CD8-positive, alpha-beta T cell (primary cell): ENCODE measurements at regions of chr6 and their contacts with region 1.

Region 1: DNA sequence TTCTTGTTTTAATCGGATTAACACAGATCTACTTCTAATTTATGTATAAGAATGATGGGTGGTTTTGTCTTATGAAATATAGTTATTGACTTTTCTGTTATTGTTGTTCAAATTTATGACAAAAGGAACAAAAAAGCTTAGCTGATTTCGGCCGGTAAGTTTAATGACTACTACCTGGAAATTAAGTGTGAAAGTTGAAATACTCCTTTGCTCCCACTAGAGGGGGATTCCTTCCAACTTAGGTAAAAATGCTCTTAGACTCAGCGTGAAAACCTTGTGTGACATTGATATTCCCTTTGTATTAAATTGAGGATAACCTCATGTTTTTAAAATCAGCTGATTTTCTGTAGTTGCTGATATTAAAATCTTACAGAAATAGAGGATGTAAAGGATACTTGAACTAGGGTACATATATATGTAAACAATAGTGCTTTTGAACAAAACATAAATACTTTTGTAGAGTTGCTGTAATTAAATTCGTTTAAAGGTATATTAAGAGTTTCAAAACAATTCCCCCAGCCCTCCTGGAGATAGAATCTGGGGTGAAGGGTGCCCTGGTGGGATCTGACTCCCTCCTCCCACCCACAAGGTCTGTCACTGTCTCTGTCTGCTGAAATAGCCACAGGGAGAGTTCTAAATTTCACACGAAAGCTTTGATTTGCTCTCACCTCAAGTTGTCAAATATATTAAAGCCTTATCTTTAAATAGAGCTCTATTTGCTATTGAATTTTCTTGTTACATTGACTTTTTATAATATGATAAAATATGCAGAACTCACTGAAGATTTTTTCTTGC is 257.5 kb downstream of the ARID1B start:
- DNase-seq: peak in 2 of 9 experiments; percentile 61 to 74
- ATAC-seq: peak; percentile 83
- H3K4me3 ChIP-seq: no peak overlapping the region
- H3K4me3 Mint-ChIP-seq: peak overlapping the region; percentile 97
- H3K27ac ChIP-seq: no peak overlapping the region
- H3K27ac Mint-ChIP-seq: peak overlapping the region; percentile 53
- H3K4me1 ChIP-seq: peaks cover 24% of the 10 kb centered on the region
- H3K4me1 Mint-ChIP-seq: peaks cover 33% of the 10 kb centered on the region
- H3K27me3 ChIP-seq: no peaks in the 10 kb centered on the region
- H3K27me3 Mint-ChIP-seq: no peaks in the 10 kb centered on the region
- CTCF ChIP-seq: peak; percentile 77

Region 2: DNA sequence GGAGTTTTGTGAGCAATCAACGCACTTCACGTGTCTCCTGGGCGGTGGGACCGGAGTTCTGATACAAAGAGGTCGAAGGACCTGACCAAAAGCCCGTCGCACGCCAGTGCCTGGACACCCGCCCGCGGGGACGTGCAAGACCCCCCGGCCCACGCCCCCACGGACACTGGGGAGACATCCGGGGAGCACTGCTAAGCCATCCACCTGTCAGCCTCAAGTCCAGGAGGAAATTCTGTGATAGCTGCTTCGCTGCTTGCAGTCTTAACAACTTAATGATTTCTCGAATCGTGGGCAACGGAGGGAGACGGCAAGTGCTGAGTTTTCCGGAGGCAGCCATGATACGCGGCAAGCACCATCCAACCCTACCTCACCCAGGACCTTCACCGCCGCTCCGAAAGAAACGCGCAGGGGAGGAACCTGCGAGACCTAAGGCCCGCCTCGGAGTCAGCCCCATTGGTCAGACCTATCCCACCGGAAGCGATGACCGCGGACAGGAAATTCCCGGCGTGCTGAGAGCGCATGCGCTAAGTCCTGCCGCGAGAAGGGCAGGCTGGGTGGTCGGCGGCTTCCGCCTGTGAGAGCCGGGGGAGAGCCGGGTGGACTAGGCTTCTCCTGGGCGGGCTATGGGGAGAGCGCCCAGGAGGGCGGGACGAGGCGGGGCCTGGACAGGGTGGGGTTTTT is 1720.4 kb before region 1 on chr6 and contains the start of gene TFB1M:
- CTCF ChIA-PET with region 1: no interaction called
- POLR2A ChIA-PET with region 1: no interaction called
- intact Hi-C with region 1: loop called in 1 of 2 experiments (anchors 5 kb)
- DNase-seq: peak; percentile 91 to 99 (median 97)
- ATAC-seq: peak; percentile 93
- H3K4me3 ChIP-seq: peak within 1 kb of the TSS; percentile 92 to 97
- H3K4me3 Mint-ChIP-seq: peak within 1 kb of the TSS; percentile 98
- H3K27ac ChIP-seq: peak within 1 kb of the TSS; percentile 83 to 87
- H3K27ac Mint-ChIP-seq: peak within 1 kb of the TSS; percentile 97
- H3K4me1 ChIP-seq: peaks cover 7% of the 10 kb centered on the region
- H3K4me1 Mint-ChIP-seq: peaks cover 35% of the 10 kb centered on the region
- H3K27me3 ChIP-seq: no peaks in the 10 kb centered on the region
- H3K27me3 Mint-ChIP-seq: no peaks in the 10 kb centered on the region
- CTCF ChIP-seq: no peak
- total RNA-seq, gene TFB1M: 6.3 to 7.9 TPM

Region 3: DNA sequence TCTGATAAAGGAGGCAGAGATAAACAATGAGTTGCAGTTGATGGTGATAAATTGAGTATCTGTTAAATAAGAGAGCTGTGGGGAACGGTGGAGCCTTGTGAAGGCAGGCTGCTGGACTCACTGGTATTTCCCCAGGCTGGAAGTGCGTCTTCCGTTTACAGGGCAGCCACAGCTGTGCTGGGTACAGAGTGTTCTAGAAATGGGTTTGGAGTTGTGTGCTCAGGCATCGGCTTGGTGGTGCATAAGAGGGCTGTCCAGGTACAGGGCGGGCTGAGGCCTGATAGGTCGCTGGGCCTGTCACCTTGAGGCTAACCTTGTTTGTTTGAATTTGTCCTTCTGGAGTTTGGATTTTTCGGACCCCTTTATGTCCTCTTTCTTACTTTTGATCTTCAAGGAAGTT is 218.1 kb before region 1 on chr6:
- CTCF ChIA-PET with region 1: no interaction called
- POLR2A ChIA-PET with region 1: no interaction called
- intact Hi-C with region 1: no loop called
- DNase-seq: no peak
- ATAC-seq: no peak
- H3K4me3 ChIP-seq: no peak overlapping the region
- H3K4me3 Mint-ChIP-seq: no peak overlapping the region
- H3K27ac ChIP-seq: no peak overlapping the region
- H3K27ac Mint-ChIP-seq: no peak overlapping the region
- H3K4me1 ChIP-seq: peaks cover 81% of the 10 kb centered on the region
- H3K4me1 Mint-ChIP-seq: peaks cover 85% of the 10 kb centered on the region
- H3K27me3 ChIP-seq: no peaks in the 10 kb centered on the region
- H3K27me3 Mint-ChIP-seq: no peaks in the 10 kb centered on the region
- CTCF ChIP-seq: no peak

Region 4: DNA sequence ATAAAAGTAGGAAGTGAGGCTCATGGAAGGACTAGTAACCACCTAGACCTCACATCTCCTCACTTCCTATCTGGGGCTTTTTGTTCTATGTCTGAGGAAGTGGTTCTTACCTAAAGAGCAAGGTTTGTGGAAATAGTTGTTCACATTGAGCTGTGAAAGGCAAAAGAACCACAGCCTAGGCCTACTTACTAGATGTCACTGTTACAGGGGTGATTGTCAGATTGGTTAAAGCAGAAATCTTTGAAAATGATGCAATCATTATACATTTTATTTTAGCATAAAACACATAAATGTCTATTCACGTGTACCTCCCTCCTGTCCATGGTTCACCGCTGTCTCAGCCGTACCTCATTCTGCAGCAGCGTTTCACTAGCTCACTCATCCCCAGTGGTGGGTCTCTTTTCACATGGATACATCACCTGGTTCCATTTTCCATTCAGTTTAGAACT is 19.9 kb after region 1 on chr6:
- CTCF ChIA-PET with region 1: interaction called, 3 read pairs
- POLR2A ChIA-PET with region 1: no interaction called
- intact Hi-C with region 1: loop called in 1 of 2 experiments (anchors 1 kb)
- DNase-seq: peak in 5 of 9 experiments; percentile 14 to 87 (median 53)
- ATAC-seq: peak; percentile 94
- H3K4me3 ChIP-seq: no peak overlapping the region
- H3K4me3 Mint-ChIP-seq: peak overlapping the region; percentile 43
- H3K27ac ChIP-seq: peak overlapping the region; percentile 13 to 73
- H3K27ac Mint-ChIP-seq: peak overlapping the region; percentile 95
- H3K4me1 ChIP-seq: peaks cover 26% of the 10 kb centered on the region
- H3K4me1 Mint-ChIP-seq: peaks cover 39% of the 10 kb centered on the region
- H3K27me3 ChIP-seq: no peaks in the 10 kb centered on the region
- H3K27me3 Mint-ChIP-seq: no peaks in the 10 kb centered on the region
- CTCF ChIP-seq: no peak

Region 5: DNA sequence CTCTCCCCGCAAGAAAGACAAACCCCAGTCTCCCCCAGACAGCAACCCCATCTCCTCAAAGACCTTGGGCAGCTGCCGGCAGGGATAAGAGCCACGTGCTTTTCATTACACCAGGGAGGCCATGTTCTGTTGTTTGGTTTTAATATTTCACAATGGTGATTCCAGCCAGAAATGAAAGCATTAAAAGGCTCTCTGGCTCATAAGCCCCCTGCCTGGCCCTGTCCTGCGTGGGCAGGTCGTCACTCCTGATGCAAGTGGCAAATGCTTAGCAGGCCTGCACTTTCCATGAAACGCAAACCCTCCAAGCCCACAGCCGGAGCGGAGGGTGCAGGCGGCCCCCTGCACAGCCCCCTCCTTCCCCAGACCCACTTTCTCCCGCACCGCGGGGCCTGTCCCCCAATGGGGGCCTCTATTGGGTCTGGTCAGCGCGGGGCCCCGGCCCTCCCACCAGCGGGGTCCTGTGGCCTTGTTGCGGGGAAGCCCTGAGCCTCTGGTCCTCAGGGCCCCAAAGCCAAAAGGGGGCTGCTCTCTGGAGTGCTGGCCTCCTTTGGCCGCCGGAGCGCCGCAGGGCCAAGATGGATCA is 211.5 kb after region 1 on chr6:
- CTCF ChIA-PET with region 1: no interaction called
- POLR2A ChIA-PET with region 1: no interaction called
- intact Hi-C with region 1: no loop called
- DNase-seq: no peak
- ATAC-seq: no peak
- H3K4me3 ChIP-seq: no peak overlapping the region
- H3K4me3 Mint-ChIP-seq: no peak overlapping the region
- H3K27ac ChIP-seq: no peak overlapping the region
- H3K27ac Mint-ChIP-seq: no peak overlapping the region
- H3K4me1 ChIP-seq: no peaks in the 10 kb centered on the region
- H3K4me1 Mint-ChIP-seq: no peaks in the 10 kb centered on the region
- H3K27me3 ChIP-seq: peaks cover 0 to 2% of the 10 kb centered on the region in 2 experiments
- H3K27me3 Mint-ChIP-seq: peaks cover 7% of the 10 kb centered on the region
- CTCF ChIP-seq: no peak

Region 6: GRCh38 chr6:157841211-157841840 is 806.7 kb after region 1 on chr6:
- CTCF ChIA-PET with region 1: no interaction called
- POLR2A ChIA-PET with region 1: no interaction called
- intact Hi-C with region 1: no loop called
- DNase-seq: peak in 1 of 9 experiments; percentile 13
- ATAC-seq: no peak
- H3K4me3 ChIP-seq: no peak overlapping the region
- H3K4me3 Mint-ChIP-seq: no peak overlapping the region
- H3K27ac ChIP-seq: no peak overlapping the region
- H3K27ac Mint-ChIP-seq: no peak overlapping the region
- H3K4me1 ChIP-seq: peaks cover 16% of the 10 kb centered on the region
- H3K4me1 Mint-ChIP-seq: peaks cover 75% of the 10 kb centered on the region
- H3K27me3 ChIP-seq: no peaks in the 10 kb centered on the region
- H3K27me3 Mint-ChIP-seq: no peaks in the 10 kb centered on the region
- CTCF ChIP-seq: no peak